CD4-positive, alpha-beta memory T cell (primary cell): ENCODE measurements at regions of chr19 and their contacts with region 1.

Region 1: GRCh38 chr19:1064661-1065605 is 2.0 kb upstream of the ARHGAP45 start:
- DNase-seq: peak; percentile 64 to 73 (median 71)
- H3K4me3 ChIP-seq: no peak overlapping the region
- H3K4me3 Mint-ChIP-seq: peak overlapping the region; percentile 57 to 78 (median 69)
- H3K27ac ChIP-seq: no peak overlapping the region
- H3K27ac Mint-ChIP-seq: peak overlapping the region; percentile 53 to 95 (median 86)
- H3K4me1 ChIP-seq: peaks cover 43% of the 10 kb centered on the region
- H3K4me1 Mint-ChIP-seq: peaks cover 21 to 56% (median 36%) of the 10 kb centered on the region in 4 donors
- H3K27me3 ChIP-seq: no peaks in the 10 kb centered on the region
- H3K27me3 Mint-ChIP-seq: no peaks in the 10 kb centered on the region

Region 2: GRCh38 chr19:1026189-1027019 is 38.5 kb before region 1 on chr19 and contains the start of gene CNN2:
- CTCF ChIA-PET with region 1: interaction called, 12 read pairs
- POLR2A ChIA-PET with region 1: interaction called, 1,029 read pairs
- intact Hi-C with region 1: loop called (anchors 1 kb)
- DNase-seq: peak in 4 of 5 donors; percentile 46 to 68 (median 60)
- H3K4me3 ChIP-seq: peak within 1 kb of the TSS; percentile 91 to 97
- H3K4me3 Mint-ChIP-seq: peak within 1 kb of the TSS; percentile 97 to 99 (median 98)
- H3K27ac ChIP-seq: peak within 1 kb of the TSS; percentile 83
- H3K27ac Mint-ChIP-seq: peak within 1 kb of the TSS; percentile 93 to 98 (median 95)
- H3K4me1 ChIP-seq: peaks cover 38% of the 10 kb centered on the region
- H3K4me1 Mint-ChIP-seq: peaks cover 11 to 38% (median 23%) of the 10 kb centered on the region in 4 donors
- H3K27me3 ChIP-seq: no peaks in the 10 kb centered on the region
- H3K27me3 Mint-ChIP-seq: peaks cover 0 to 2% of the 10 kb centered on the region in 2 donors
- total RNA-seq, gene CNN2: 263 to 266 TPM

Region 3: DNA sequence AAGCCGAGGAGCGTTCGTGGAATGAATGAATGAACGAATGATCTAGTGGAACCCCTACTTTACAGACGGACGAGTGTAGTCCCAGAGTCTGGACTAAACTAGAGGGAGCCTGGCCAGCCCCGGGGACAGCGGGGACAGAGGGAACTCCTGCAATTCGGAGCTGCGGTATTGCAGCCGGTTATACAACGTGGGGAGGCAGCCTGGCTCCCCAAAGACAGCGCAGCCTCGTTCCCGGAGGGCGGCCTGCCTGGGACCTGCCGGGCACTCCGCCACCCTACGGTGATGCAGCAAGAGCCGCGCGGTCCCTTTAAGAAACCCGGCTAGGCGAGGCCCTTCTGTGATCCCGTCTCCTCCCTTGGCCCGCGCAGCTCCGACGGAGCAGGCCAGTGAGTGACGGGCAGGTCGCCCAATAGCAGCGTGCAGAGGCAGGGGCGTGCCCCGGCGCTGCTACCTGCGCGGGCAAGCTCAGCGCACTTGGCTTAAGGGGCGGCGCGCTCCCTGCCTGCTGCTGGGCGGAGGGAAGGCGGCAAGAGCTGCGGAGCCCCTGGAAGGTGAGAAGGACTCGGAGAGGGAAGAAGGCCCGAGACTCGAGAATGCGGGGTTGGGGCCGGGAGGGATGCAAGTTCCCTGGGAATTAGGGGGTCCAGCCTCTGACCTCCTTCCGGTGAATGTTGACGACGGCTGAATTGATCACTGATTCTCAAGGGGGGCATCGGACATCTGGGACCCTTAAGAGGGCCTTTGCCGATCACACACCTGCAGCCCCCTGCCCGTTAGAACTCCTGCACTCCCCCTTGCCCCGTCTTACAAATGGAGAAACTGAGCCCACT is 25.1 kb before region 1 on chr19 and contains the start of gene ABCA7:
- CTCF ChIA-PET with region 1: interaction called, 4 read pairs
- POLR2A ChIA-PET with region 1: interaction called, 3,893 read pairs
- intact Hi-C with region 1: loop called (anchors 1 kb)
- DNase-seq: peak; percentile 98 to 99 (median 98)
- H3K4me3 ChIP-seq: peak within 1 kb of the TSS; percentile 56 to 100
- H3K4me3 Mint-ChIP-seq: peak within 1 kb of the TSS; percentile 95 to 100 (median 97)
- H3K27ac ChIP-seq: peak within 1 kb of the TSS; percentile 75
- H3K27ac Mint-ChIP-seq: peak within 1 kb of the TSS; percentile 91 to 97 (median 95)
- H3K4me1 ChIP-seq: peaks cover 54% of the 10 kb centered on the region
- H3K4me1 Mint-ChIP-seq: peaks cover 27 to 69% (median 48%) of the 10 kb centered on the region in 4 donors
- H3K27me3 ChIP-seq: no peaks in the 10 kb centered on the region
- H3K27me3 Mint-ChIP-seq: no peaks in the 10 kb centered on the region
- total RNA-seq, gene ABCA7: 313 to 319 TPM

Region 4: GRCh38 chr19:1094975-1095701 is 30.2 kb after region 1 on chr19 and contains the start of gene POLR2E:
- CTCF ChIA-PET with region 1: interaction called, 219 read pairs
- POLR2A ChIA-PET with region 1: interaction called, 3,893 read pairs
- intact Hi-C with region 1: loop called (anchors 2 kb)
- DNase-seq: peak; percentile 97 to 99 (median 98)
- H3K4me3 ChIP-seq: peak within 1 kb of the TSS; percentile 54 to 65
- H3K4me3 Mint-ChIP-seq: peak within 1 kb of the TSS; percentile 83 to 96 (median 90)
- H3K27ac ChIP-seq: peak within 1 kb of the TSS; percentile 85
- H3K27ac Mint-ChIP-seq: peak within 1 kb of the TSS; percentile 87 to 97 (median 93)
- H3K4me1 ChIP-seq: peaks cover 44% of the 10 kb centered on the region
- H3K4me1 Mint-ChIP-seq: peaks cover 22 to 75% (median 46%) of the 10 kb centered on the region in 4 donors
- H3K27me3 ChIP-seq: no peaks in the 10 kb centered on the region
- H3K27me3 Mint-ChIP-seq: no peaks in the 10 kb centered on the region
- total RNA-seq, gene POLR2E: 76.0 to 80.0 TPM

Region 5: DNA sequence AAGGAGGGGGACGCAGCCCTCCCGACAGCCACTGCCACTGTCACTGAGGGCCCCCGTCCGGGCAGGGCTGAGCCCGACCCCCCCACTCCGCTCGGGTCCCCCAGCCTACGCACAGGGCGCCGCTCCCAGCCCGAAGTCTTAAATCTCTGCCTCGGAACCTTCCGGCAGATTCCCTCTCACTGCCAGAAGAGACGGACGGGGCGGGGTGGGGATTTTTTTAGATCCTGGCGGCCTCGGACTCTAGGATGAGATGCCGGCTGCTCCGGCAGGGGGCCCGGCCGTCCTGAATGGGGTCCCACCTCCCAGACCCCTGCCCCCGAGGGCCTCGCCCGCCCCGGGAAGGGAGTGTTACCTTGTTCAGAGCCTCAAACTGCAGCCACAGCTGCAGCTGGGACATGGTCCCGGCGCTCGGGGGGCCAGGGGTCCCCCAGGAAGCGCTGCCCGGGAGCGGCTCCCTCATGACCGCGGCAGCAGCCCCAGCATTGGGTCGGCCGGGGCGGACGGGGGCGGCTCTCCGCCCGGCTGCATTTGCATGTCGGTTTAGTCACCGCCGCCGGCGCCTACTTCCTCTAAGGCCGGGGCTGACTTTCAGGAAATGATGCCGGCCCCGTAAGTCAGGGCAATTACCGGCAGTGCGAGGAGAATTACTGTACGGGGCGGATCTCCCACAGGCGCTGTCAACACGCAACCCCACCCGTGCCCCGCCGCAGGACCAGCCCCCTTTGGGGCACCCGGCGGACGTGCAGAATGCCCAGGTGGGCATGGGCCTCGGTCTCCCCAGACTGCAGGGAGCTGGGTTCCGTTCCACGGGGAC is 67.0 kb after region 1 on chr19:
- CTCF ChIA-PET with region 1: interaction called, 6 read pairs
- POLR2A ChIA-PET with region 1: interaction called, 32 read pairs
- intact Hi-C with region 1: no loop called
- DNase-seq: peak; percentile 82 to 92 (median 83)
- H3K4me3 ChIP-seq: peak overlapping the region; percentile 61 to 89
- H3K4me3 Mint-ChIP-seq: peak overlapping the region; percentile 85 to 92 (median 88)
- H3K27ac ChIP-seq: peak overlapping the region; percentile 90
- H3K27ac Mint-ChIP-seq: peak overlapping the region; percentile 91 to 94 (median 94)
- H3K4me1 ChIP-seq: peaks cover 60% of the 10 kb centered on the region
- H3K4me1 Mint-ChIP-seq: peaks cover 7 to 35% (median 23%) of the 10 kb centered on the region in 4 donors
- H3K27me3 ChIP-seq: no peaks in the 10 kb centered on the region
- H3K27me3 Mint-ChIP-seq: no peaks in the 10 kb centered on the region

Region 6: GRCh38 chr19:1189419-1189818 is 124.5 kb after region 1 on chr19:
- CTCF ChIA-PET with region 1: interaction called, 13 read pairs
- POLR2A ChIA-PET with region 1: interaction called, 35 read pairs
- intact Hi-C with region 1: no loop called
- DNase-seq: peak in 2 of 5 donors; percentile 36 to 68
- H3K4me3 ChIP-seq: no peak overlapping the region
- H3K4me3 Mint-ChIP-seq: peak overlapping the region in 6 of 8 donors; percentile 39 to 73 (median 50)
- H3K27ac ChIP-seq: no peak overlapping the region
- H3K27ac Mint-ChIP-seq: peak overlapping the region in 6 of 7 donors; percentile 30 to 92 (median 79)
- H3K4me1 ChIP-seq: peaks cover 39% of the 10 kb centered on the region
- H3K4me1 Mint-ChIP-seq: peaks cover 13 to 30% (median 18%) of the 10 kb centered on the region in 4 donors
- H3K27me3 ChIP-seq: no peaks in the 10 kb centered on the region
- H3K27me3 Mint-ChIP-seq: no peaks in the 10 kb centered on the region

Region 7: DNA sequence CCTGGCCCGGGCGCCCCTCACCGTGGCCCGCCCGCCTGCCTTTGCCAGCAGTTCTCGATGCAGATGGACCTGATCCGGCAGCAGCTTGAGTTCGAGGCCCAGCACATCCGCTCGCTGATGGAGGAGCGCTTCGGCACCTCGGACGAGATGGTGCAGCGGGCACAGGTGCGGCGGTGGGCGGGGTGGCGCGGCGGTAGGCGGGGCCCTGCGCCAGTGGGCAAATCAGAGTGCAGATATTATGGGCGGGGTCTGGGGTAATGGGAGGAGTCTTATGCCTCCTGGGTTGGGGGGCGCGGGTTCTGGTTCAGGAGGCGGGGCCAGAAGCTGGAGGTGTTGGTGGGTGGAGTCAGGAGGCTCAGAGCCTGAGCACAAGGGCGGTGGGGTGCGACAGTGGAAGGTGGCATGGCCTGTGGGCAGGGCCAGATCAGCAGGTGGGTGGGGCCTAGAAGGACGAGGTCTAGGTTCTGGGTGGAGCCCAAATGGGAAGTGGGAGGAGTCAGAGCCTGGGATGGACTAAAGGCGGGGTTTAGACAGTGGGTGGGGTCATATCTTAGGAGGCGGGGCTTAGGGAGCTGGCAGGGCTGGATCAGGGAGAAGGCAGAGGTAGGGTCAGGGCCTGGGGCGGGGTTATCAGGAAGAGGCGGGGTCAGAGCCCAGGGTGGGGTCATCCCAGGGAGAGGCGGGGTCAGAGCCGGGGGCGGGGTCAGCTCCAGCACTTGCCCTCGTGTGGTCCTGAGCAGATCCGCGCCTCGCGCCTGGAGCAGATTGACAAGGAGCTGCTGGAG is 390.6 kb after region 1 on chr19:
- CTCF ChIA-PET with region 1: no interaction called
- POLR2A ChIA-PET with region 1: no interaction called
- intact Hi-C with region 1: no loop called
- DNase-seq: peak; percentile 51 to 70 (median 55)
- H3K4me3 ChIP-seq: no peak overlapping the region
- H3K4me3 Mint-ChIP-seq: peak overlapping the region in 6 of 8 donors; percentile 32 to 61 (median 56)
- H3K27ac ChIP-seq: no peak overlapping the region
- H3K27ac Mint-ChIP-seq: peak overlapping the region in 3 of 7 donors; percentile 62 to 87 (median 74)
- H3K4me1 ChIP-seq: peaks cover 19% of the 10 kb centered on the region
- H3K4me1 Mint-ChIP-seq: peaks cover 6 to 17% (median 12%) of the 10 kb centered on the region in 4 donors
- H3K27me3 ChIP-seq: peaks cover 11% of the 10 kb centered on the region
- H3K27me3 Mint-ChIP-seq: peaks cover 20 to 38% of the 10 kb centered on the region in 2 donors